RWPE1 (cell line): ENCODE measurements at regions of chr10 and their contacts with region 1.

Region 1: GRCh38 chr10:116190883-116191282 is 82.1 kb downstream of the GFRA1 start:
- DNase-seq: no peak
- H3K27ac ChIP-seq: no peak overlapping the region
- CTCF ChIP-seq: no peak

Region 2: DNA sequence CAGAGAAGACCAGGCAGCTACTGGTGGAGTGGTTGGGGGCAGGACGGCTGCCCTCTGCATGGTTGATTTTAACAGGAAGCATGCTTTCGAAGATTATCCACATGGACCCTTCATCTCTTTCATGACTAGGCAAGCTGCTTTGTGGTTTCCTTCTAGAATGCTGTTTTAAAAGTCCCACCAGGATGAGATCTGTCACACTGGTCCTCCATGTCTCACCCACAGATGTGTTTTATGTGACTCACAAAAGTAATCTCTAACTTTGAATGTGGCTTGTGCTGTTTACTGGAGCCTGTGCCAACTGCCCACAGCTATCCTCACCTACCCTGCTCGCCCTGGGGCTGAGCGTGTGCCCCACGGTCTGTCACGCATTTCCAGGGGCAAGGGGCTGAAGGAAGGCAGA is 106.7 kb before region 1 on chr10:
- CTCF ChIA-PET with region 1: no interaction called
- POLR2A ChIA-PET with region 1: no interaction called
- DNase-seq: no peak
- H3K27ac ChIP-seq: no peak overlapping the region
- CTCF ChIP-seq: no peak

Region 3: GRCh38 chr10:116215651-116216050 is 24.8 kb after region 1 on chr10:
- CTCF ChIA-PET with region 1: interaction called, 10 read pairs
- POLR2A ChIA-PET with region 1: no interaction called
- DNase-seq: no peak
- H3K27ac ChIP-seq: no peak overlapping the region
- CTCF ChIP-seq: no peak